ENCODE measurements at regions of chr15 and their contacts with region 1.

Region 1: GRCh38 chr15:89442671-89443307 is 53.6 kb downstream of the RHCG start:
- DNase-seq: peak; percentile 94
- ATAC-seq: peak; percentile 82
- H3K4me3 Mint-ChIP-seq: no peak overlapping the region
- H3K27ac Mint-ChIP-seq: no peak overlapping the region
- H3K4me1 Mint-ChIP-seq: peaks cover 29% of the 10 kb centered on the region
- H3K27me3 Mint-ChIP-seq: peaks cover 26% of the 10 kb centered on the region
- CTCF ChIP-seq: peak; percentile 91

Region 2: DNA sequence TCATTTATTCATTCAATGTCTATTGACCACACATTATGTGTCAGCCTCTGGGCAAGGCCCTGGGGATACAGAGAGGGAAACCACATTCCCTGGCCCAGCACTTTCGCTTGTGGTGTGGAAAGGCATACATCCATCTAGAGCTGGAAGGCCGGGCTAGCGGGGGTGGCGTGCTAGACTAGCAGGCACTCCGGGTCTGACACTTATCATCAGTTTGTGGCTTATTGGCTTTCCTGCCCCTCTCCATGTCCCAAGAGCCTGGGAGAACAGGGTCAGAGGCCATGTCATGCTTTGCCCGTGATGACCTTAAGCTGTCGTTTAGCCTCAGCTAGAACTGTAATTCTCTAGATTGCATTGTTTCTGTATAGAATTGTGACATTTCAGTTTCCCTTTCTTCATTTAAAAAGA is 56.9 kb before region 1 on chr15:
- CTCF ChIA-PET with region 1: interaction called, 12 read pairs
- POLR2A ChIA-PET with region 1: interaction called, 3 read pairs
- DNase-seq: no peak
- ATAC-seq: no peak
- H3K4me3 Mint-ChIP-seq: no peak overlapping the region
- H3K27ac Mint-ChIP-seq: no peak overlapping the region
- H3K4me1 Mint-ChIP-seq: peaks cover 38% of the 10 kb centered on the region
- H3K27me3 Mint-ChIP-seq: peaks cover 97% of the 10 kb centered on the region
- CTCF ChIP-seq: no peak

Region 3: GRCh38 chr15:89423981-89424380 is 18.8 kb before region 1 on chr15:
- CTCF ChIA-PET with region 1: interaction called, 96 read pairs
- POLR2A ChIA-PET with region 1: no interaction called
- DNase-seq: no peak
- ATAC-seq: peak; percentile 59; the same call in 1 of the 2 replicates
- H3K4me3 Mint-ChIP-seq: no peak overlapping the region
- H3K27ac Mint-ChIP-seq: no peak overlapping the region
- H3K4me1 Mint-ChIP-seq: peaks cover 11% of the 10 kb centered on the region
- H3K27me3 Mint-ChIP-seq: peaks cover 54% of the 10 kb centered on the region
- CTCF ChIP-seq: no peak

Region 4: GRCh38 chr15:89457097-89457496 is 14.3 kb after region 1 on chr15:
- CTCF ChIA-PET with region 1: interaction called, 42 read pairs
- POLR2A ChIA-PET with region 1: no interaction called
- DNase-seq: no peak
- ATAC-seq: peak; percentile 83
- H3K4me3 Mint-ChIP-seq: no peak overlapping the region
- H3K27ac Mint-ChIP-seq: no peak overlapping the region
- H3K4me1 Mint-ChIP-seq: peaks cover 12% of the 10 kb centered on the region
- H3K27me3 Mint-ChIP-seq: peaks cover 89% of the 10 kb centered on the region
- CTCF ChIP-seq: no peak

Region 5: GRCh38 chr15:89472785-89473256 is 30.0 kb after region 1 on chr15:
- CTCF ChIA-PET with region 1: interaction called, 132 read pairs
- POLR2A ChIA-PET with region 1: interaction called, 3 read pairs
- DNase-seq: peak; percentile 95
- ATAC-seq: peak; percentile 92
- H3K4me3 Mint-ChIP-seq: no peak overlapping the region
- H3K27ac Mint-ChIP-seq: no peak overlapping the region
- H3K4me1 Mint-ChIP-seq: peaks cover 26% of the 10 kb centered on the region
- H3K27me3 Mint-ChIP-seq: peaks cover 30% of the 10 kb centered on the region
- CTCF ChIP-seq: peak; percentile 86

Region 6: GRCh38 chr15:89614164-89614563 is 171.4 kb after region 1 on chr15:
- CTCF ChIA-PET with region 1: no interaction called
- POLR2A ChIA-PET with region 1: no interaction called
- DNase-seq: no peak
- ATAC-seq: no peak
- H3K4me3 Mint-ChIP-seq: no peak overlapping the region
- H3K27ac Mint-ChIP-seq: no peak overlapping the region
- H3K4me1 Mint-ChIP-seq: no peaks in the 10 kb centered on the region
- H3K27me3 Mint-ChIP-seq: no peaks in the 10 kb centered on the region
- CTCF ChIP-seq: no peak

Measured in WTC11 (cell line).